T-cell (primary cell): ENCODE measurements at regions of chr13 and their contacts with region 1.

Region 1: GRCh38 chr13:51452361-51453206 is at the start of gene INTS6:
- DNase-seq: peak; percentile 97 to 99 (median 99)
- ATAC-seq: peak; percentile 82 to 86 (median 82)
- H3K4me3 ChIP-seq: peak within 1 kb of the TSS; percentile 86 to 95
- H3K4me3 Mint-ChIP-seq: peak within 1 kb of the TSS; percentile 84 to 93 (median 91)
- H3K27ac ChIP-seq: peak within 1 kb of the TSS; percentile 94
- H3K27ac Mint-ChIP-seq: peak within 1 kb of the TSS; percentile 98
- H3K4me1 ChIP-seq: peaks cover 12 to 32% of the 10 kb centered on the region in 2 experiments
- H3K4me1 Mint-ChIP-seq: peaks cover 49 to 62% (median 56%) of the 10 kb centered on the region in 3 donors
- H3K27me3 ChIP-seq: no peaks in the 10 kb centered on the region
- H3K27me3 Mint-ChIP-seq: no peaks in the 10 kb centered on the region
- total RNA-seq, gene INTS6: 50.0 to 77.9 (median 58.7) TPM

Region 2: DNA sequence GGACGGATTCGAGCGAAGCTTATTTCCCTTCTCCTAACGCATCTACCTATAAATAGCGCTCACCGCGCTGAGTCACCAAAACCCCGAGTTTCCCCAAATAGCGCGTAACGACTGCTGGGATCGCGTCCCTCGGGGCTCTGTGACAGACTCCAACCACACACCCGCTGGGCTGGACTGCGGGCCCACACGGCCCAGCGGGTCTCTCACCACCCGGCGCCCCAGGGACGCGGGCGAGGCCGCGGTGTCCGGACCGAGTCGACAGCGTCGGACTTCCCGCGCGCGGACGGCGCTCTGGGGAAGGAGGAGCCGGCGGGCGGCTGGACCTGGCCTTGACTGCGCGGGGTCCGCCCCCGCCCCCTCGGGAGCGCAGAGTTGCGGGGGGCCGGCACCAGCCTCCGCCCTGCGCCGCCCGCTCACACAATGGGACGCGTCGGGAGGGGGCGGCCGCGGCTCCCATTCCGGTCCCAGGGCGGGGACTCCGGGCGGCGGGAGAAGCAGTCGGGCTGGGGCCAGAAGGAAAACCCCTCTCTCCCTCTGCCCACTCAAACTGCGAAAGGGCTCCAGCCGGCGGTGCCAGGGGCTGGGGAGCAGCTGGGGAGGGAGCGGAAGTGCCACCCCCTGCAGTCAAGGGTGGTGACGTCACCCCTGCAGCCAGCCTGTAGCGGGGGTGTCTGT is 1328.6 kb before region 1 on chr13:
- CTCF ChIA-PET with region 1: no interaction called
- POLR2A ChIA-PET with region 1: interaction called, 3 to 13 read pairs
- DNase-seq: peak in 34 of 35 experiments; percentile 48 to 89 (median 62)
- ATAC-seq: peak; percentile 71 to 76 (median 72)
- H3K4me3 ChIP-seq: peak overlapping the region; percentile 74
- H3K4me3 Mint-ChIP-seq: peak overlapping the region; percentile 84 to 92 (median 85)
- H3K27ac ChIP-seq: peak overlapping the region; percentile 93
- H3K27ac Mint-ChIP-seq: peak overlapping the region; percentile 90 to 95
- H3K4me1 ChIP-seq: peaks cover 22 to 46% of the 10 kb centered on the region in 2 experiments
- H3K4me1 Mint-ChIP-seq: peaks cover 40 to 61% (median 51%) of the 10 kb centered on the region in 3 donors
- H3K27me3 ChIP-seq: peaks cover 0 to 25% of the 10 kb centered on the region in 2 experiments
- H3K27me3 Mint-ChIP-seq: peaks cover 4 to 12% of the 10 kb centered on the region in 2 donors

Region 3: GRCh38 chr13:51342706-51343105 is 109.9 kb before region 1 on chr13:
- CTCF ChIA-PET with region 1: no interaction called
- POLR2A ChIA-PET with region 1: no interaction called
- DNase-seq: no peak
- ATAC-seq: no peak
- H3K4me3 ChIP-seq: no peak overlapping the region
- H3K4me3 Mint-ChIP-seq: no peak overlapping the region
- H3K27ac ChIP-seq: no peak overlapping the region
- H3K27ac Mint-ChIP-seq: no peak overlapping the region
- H3K4me1 ChIP-seq: no peaks in the 10 kb centered on the region
- H3K4me1 Mint-ChIP-seq: no peaks in the 10 kb centered on the region
- H3K27me3 ChIP-seq: no peaks in the 10 kb centered on the region
- H3K27me3 Mint-ChIP-seq: no peaks in the 10 kb centered on the region

Region 4: DNA sequence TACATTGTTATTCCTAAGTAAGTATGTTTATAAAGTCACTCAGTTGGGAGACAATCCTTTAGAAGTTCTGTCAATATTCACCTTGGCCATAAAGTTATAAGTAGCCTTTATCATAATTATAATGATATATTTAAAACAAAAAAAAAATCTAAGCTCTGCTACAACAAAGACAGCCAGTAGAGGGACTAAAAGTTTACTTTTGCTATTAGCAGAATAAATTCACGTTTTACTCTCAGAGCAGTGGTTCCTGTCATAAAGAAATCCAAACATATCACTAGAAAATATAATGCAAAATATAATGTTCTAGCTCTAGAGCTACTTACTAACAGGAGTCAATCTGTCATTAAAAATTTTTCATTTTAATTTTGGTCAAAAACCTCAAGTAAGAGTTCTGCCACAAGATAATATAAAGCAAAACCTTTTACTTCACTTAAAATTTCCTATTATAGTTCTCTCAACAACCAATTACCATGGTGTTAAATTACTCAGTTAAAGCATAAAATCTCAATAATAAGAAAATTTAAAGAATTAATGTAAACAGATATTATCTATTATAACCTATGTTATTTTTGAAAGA is 17.5 kb before region 1 on chr13:
- CTCF ChIA-PET with region 1: interaction called, 4 to 14 read pairs
- POLR2A ChIA-PET with region 1: interaction called, 5 to 15 read pairs
- DNase-seq: peak in 1 of 35 experiments; percentile 58
- ATAC-seq: peak in 1 of 4 experiments; percentile 51
- H3K4me3 ChIP-seq: no peak overlapping the region
- H3K4me3 Mint-ChIP-seq: no peak overlapping the region
- H3K27ac ChIP-seq: no peak overlapping the region
- H3K27ac Mint-ChIP-seq: no peak overlapping the region
- H3K4me1 ChIP-seq: peaks cover 0 to 9% of the 10 kb centered on the region in 2 experiments
- H3K4me1 Mint-ChIP-seq: peaks cover 18 to 27% (median 26%) of the 10 kb centered on the region in 3 donors
- H3K27me3 ChIP-seq: no peaks in the 10 kb centered on the region
- H3K27me3 Mint-ChIP-seq: no peaks in the 10 kb centered on the region

Region 5: GRCh38 chr13:51603716-51604115 is 151.1 kb after region 1 on chr13:
- CTCF ChIA-PET with region 1: no interaction called
- POLR2A ChIA-PET with region 1: no interaction called
- DNase-seq: no peak
- ATAC-seq: no peak
- H3K4me3 ChIP-seq: no peak overlapping the region
- H3K4me3 Mint-ChIP-seq: no peak overlapping the region
- H3K27ac ChIP-seq: no peak overlapping the region
- H3K27ac Mint-ChIP-seq: no peak overlapping the region
- H3K4me1 ChIP-seq: peaks cover 0 to 3% of the 10 kb centered on the region in 2 experiments
- H3K4me1 Mint-ChIP-seq: peaks cover 24 to 50% (median 24%) of the 10 kb centered on the region in 3 donors
- H3K27me3 ChIP-seq: no peaks in the 10 kb centered on the region
- H3K27me3 Mint-ChIP-seq: no peaks in the 10 kb centered on the region

Region 6: GRCh38 chr13:51614350-51614786 is 161.8 kb after region 1 on chr13:
- CTCF ChIA-PET with region 1: interaction called in 1 of 2 experiments, 5 read pairs
- POLR2A ChIA-PET with region 1: interaction called in 1 of 2 experiments, 20 read pairs
- DNase-seq: peak in 34 of 35 experiments; percentile 12 to 70 (median 35)
- ATAC-seq: peak; percentile 90 to 98 (median 98)
- H3K4me3 ChIP-seq: peak overlapping the region; percentile 30 to 34
- H3K4me3 Mint-ChIP-seq: peak overlapping the region; percentile 76 to 81 (median 77)
- H3K27ac ChIP-seq: peak overlapping the region; percentile 81
- H3K27ac Mint-ChIP-seq: peak overlapping the region; percentile 95
- H3K4me1 ChIP-seq: peaks cover 5 to 7% of the 10 kb centered on the region in 2 experiments
- H3K4me1 Mint-ChIP-seq: peaks cover 20 to 30% (median 27%) of the 10 kb centered on the region in 3 donors
- H3K27me3 ChIP-seq: no peaks in the 10 kb centered on the region
- H3K27me3 Mint-ChIP-seq: no peaks in the 10 kb centered on the region

Region 7: DNA sequence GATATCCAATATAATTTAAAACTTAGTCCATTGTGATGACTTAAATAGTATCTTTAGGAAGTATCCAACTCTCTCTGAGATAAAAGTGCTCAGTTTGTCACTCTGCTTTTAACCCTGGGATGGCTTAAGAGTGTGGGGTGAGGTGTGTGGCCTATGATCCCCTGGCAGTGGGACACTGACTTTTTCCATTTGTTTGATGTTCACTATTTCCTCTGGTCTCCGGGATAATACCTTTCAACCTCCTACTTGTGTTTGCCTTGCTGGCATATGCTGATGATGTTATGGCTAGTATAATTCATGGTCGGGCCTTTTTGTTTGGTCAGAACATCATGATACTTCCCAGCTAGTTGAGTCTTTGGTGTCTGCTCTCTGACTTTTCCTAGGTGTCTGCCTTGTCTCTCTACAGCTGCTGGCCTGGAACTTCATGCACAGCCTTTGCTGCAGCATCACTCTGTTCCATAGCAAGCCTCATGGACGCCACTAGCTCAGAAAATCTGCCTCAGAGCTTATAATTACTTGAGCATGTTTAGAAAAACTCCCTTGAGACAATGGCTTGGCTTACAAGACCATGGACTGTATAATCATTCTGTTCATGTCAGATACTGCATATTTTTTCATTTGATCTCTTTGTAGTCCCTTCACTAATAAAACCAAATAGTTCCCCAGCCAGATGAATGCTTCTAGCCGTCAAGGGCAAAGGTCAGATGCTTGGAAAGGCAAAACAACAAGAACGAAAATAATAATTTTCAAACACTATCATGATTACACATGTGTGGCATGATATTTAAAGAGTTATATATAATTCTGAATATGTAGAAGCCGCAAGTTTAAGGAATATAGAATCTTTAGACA is 206.9 kb after region 1 on chr13:
- CTCF ChIA-PET with region 1: no interaction called
- POLR2A ChIA-PET with region 1: interaction called in 1 of 2 experiments, 14 read pairs
- DNase-seq: no peak
- ATAC-seq: no peak
- H3K4me3 ChIP-seq: no peak overlapping the region
- H3K4me3 Mint-ChIP-seq: no peak overlapping the region
- H3K27ac ChIP-seq: no peak overlapping the region
- H3K27ac Mint-ChIP-seq: no peak overlapping the region
- H3K4me1 ChIP-seq: peaks cover 3% of the 10 kb centered on the region in 2 experiments
- H3K4me1 Mint-ChIP-seq: peaks cover 21 to 24% (median 21%) of the 10 kb centered on the region in 3 donors
- H3K27me3 ChIP-seq: no peaks in the 10 kb centered on the region
- H3K27me3 Mint-ChIP-seq: no peaks in the 10 kb centered on the region

Region 8: DNA sequence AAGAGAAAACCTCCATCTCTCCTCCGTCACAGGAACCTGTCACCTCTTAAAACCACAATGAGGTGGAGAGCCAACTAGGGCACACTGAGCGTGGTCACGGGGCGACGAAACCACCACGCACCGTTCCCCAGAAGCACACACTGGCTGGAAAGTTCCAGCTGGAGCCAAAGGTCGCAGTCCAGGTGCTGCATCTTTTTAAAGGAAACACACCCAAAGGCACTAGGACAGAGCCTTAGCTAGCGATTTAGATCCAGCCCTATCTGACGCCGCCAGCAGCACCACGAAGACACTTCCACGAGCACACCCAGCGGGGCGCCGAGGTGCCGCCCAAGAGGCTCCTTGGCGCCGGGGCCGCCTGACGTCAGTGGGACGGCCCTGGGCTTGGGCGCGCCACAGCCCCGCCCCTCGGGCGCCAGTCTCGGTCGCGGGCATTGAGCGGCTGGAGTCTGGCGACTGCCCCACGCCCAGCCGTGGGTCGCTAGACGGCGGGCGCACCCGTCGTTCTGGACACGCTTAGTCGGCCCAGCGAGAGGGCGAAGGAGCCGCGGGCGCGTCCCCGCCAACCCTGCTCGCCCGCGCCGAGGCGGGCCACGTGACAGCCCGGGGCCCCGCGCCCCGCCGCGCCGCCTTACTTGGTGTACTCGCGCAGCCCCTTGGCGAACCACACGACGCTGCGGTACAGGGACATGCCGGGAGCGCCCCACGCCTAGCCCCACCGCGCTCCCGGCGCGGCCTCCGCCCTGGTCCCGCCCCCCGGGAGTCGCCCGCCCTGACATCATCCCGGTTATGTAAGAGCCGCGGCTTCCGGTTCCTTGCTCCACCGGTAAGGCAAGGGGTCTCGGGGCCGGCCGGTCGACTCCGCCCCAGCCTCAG is 351.1 kb after region 1 on chr13 and contains the start of gene DHRS12:
- CTCF ChIA-PET with region 1: interaction called in 1 of 2 experiments, 9 read pairs
- POLR2A ChIA-PET with region 1: interaction called, 5 to 31 read pairs
- DNase-seq: peak; percentile 78 to 94 (median 84)
- ATAC-seq: peak; percentile 76 to 91 (median 86)
- H3K4me3 ChIP-seq: peak within 1 kb of the TSS; percentile 80 to 86
- H3K4me3 Mint-ChIP-seq: peak within 1 kb of the TSS; percentile 88 to 94 (median 91)
- H3K27ac ChIP-seq: peak within 1 kb of the TSS; percentile 100
- H3K27ac Mint-ChIP-seq: peak within 1 kb of the TSS; percentile 99
- H3K4me1 ChIP-seq: peaks cover 18 to 38% of the 10 kb centered on the region in 2 experiments
- H3K4me1 Mint-ChIP-seq: peaks cover 57 to 62% (median 59%) of the 10 kb centered on the region in 3 donors
- H3K27me3 ChIP-seq: no peaks in the 10 kb centered on the region
- H3K27me3 Mint-ChIP-seq: no peaks in the 10 kb centered on the region
- total RNA-seq, gene DHRS12: 18.1 to 27.8 (median 21.7) TPM